Activated CD4-positive, alpha-beta T cell treated with anti-CD3 and anti-CD28 coated beads for 36 hours (primary cell): ENCODE measurements at regions of chr2 and their contacts with region 1.

Region 1: DNA sequence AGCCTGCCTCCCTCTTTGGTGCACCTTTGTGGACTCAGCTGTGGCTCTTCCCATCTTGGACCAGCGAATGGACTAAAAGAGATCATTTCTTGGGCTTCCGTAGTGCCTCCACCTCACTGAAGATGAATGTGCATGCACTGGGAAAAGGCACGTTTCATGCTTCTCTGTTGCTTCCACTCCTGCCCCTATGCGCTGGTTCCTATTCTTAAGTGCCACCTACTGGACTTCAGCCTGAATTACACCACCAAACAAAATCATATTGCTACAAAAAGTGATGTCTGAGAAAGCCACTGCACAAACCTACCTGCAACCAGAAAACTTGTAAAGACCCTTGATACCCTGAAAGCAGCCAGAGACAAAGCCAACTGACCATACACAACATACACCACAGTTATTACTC is 695.6 kb downstream of the TSN start:
- DNase-seq: peak; percentile 7
- ATAC-seq: no peak
- H3K4me3 Mint-ChIP-seq: no peak overlapping the region
- H3K27ac Mint-ChIP-seq: no peak overlapping the region
- H3K4me1 Mint-ChIP-seq: no peaks in the 10 kb centered on the region
- H3K27me3 Mint-ChIP-seq: peaks cover 6% of the 10 kb centered on the region

Region 2: DNA sequence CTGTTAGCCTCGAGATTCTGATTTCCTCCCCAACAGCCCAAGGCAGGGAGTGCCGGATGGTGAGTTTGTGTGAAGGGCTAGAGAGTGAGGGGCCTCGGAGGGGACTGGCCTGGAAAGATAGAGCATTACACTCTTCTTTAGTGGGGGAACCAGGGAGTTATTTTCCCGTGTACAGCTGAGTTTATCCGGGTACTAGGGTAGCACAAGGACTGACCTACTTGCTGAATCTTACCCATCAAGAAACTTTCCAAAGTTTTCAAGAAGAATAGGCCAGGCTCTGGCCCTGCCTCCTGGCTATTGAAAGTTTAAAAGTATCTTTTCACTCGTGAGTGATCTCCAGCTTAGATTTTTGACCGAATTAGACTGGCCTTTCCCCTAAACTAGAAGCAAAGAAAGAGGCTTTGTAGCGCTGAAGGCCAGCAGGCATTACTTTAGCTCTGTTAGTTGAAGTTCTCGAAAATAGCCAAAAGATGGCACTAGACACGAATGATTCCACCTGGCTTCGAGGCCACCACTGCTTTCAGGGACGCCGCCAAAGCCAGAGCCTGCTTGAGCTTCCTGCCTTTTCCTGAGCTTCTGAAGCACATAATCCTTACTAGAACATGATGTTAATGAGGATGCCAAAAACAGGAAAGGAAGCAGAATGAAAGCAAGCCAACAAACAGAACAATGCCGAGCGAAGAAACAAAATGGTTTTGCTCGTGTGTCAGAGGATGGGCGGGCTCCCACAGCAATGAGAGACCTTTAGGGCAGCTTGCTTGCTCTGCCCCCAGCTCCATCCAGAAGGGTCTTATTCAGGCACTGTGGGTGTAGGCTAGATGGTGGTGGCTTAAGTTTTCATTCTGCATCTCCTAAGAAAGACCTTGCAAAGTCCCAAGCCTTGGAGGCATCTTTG is 639.8 kb before region 1 on chr2:
- CTCF ChIA-PET with region 1: interaction called, 3 read pairs
- POLR2A ChIA-PET with region 1: no interaction called
- intact Hi-C with region 1: loop called in 1 of 2 experiments (anchors 5 kb)
- DNase-seq: peak; percentile 38
- ATAC-seq: peak; percentile 47
- H3K4me3 Mint-ChIP-seq: no peak overlapping the region
- H3K27ac Mint-ChIP-seq: no peak overlapping the region
- H3K4me1 Mint-ChIP-seq: no peaks in the 10 kb centered on the region
- H3K27me3 Mint-ChIP-seq: peaks cover 5% of the 10 kb centered on the region

Region 3: GRCh38 chr2:121974897-121975661 is 476.0 kb before region 1 on chr2:
- CTCF ChIA-PET with region 1: interaction called, 3 read pairs
- POLR2A ChIA-PET with region 1: no interaction called
- intact Hi-C with region 1: loop called (anchors 1 to 2 kb)
- DNase-seq: peak; percentile 58
- ATAC-seq: peak; percentile 96
- H3K4me3 Mint-ChIP-seq: peak overlapping the region; percentile 36
- H3K27ac Mint-ChIP-seq: no peak overlapping the region
- H3K4me1 Mint-ChIP-seq: peaks cover 9% of the 10 kb centered on the region
- H3K27me3 Mint-ChIP-seq: peaks cover 4% of the 10 kb centered on the region